Common myeloid progenitor, CD34-positive (primary cell): ENCODE measurements at regions of chr17 and their contacts with region 1.

Region 1: GRCh38 chr17:29777663-29778062 is 152.4 kb downstream of the SSH2 start:
- DNase-seq: no peak
- H3K4me3 ChIP-seq: no peak overlapping the region
- H3K27ac ChIP-seq: no peak overlapping the region
- H3K4me1 ChIP-seq: peaks cover 0 to 6% (median 3%) of the 10 kb centered on the region in 4 experiments
- H3K27me3 ChIP-seq: no peaks in the 10 kb centered on the region

Region 2: DNA sequence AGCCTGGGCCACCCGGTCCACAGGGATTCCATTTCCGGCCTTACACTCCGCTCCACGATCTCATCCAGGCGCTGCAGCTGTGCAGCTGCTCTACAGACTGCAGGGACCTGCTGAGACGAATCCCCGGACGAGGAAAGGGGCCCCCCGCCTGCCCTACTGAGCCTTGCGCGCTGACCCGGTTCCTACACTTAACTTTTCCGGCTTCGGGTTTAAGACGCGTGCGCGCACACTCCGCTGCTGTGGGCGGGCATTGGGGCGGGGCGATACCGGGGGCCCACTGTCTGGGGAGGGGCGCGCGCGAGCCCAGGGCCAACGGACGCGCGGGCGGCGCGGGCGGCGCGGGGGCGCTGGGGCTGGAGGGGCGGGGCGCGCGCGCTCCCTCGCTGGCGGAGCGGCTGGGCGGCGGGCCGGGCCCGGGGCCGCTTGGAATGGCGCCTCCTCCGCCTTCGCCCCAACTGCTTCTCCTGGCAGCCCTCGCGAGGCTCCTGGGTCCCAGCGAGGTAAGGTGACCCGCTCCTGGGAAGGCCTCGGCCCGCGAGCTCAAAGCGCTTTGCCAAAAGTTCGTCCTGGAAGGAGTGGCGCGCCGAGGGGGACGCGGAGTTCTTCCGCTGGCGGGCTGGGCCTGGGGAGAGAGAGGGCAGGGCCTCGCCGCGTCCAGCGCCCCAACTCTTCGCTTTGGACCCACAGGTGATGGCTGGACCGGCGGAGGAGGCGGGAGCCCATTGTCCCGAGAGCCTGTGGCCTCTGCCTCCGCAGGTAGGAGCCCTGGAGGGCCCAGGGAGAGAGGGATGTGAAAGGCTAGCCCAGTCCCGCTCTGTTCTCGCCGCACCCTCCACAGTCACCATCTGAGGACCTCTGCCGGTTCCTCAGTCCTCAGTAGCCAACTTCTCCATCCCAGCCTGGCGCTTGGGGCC is 209.1 kb before region 1 on chr17 and contains the start of gene TP53I13:
- CTCF ChIA-PET with region 1: no interaction called
- POLR2A ChIA-PET with region 1: no interaction called
- DNase-seq: peak; percentile 80 to 91 (median 87)
- H3K4me3 ChIP-seq: peak within 1 kb of the TSS; percentile 53 to 91 (median 77)
- H3K27ac ChIP-seq: peak within 1 kb of the TSS; percentile 54 to 81
- H3K4me1 ChIP-seq: peaks cover 3 to 61% (median 48%) of the 10 kb centered on the region in 4 experiments
- H3K27me3 ChIP-seq: no peaks in the 10 kb centered on the region

Region 3: DNA sequence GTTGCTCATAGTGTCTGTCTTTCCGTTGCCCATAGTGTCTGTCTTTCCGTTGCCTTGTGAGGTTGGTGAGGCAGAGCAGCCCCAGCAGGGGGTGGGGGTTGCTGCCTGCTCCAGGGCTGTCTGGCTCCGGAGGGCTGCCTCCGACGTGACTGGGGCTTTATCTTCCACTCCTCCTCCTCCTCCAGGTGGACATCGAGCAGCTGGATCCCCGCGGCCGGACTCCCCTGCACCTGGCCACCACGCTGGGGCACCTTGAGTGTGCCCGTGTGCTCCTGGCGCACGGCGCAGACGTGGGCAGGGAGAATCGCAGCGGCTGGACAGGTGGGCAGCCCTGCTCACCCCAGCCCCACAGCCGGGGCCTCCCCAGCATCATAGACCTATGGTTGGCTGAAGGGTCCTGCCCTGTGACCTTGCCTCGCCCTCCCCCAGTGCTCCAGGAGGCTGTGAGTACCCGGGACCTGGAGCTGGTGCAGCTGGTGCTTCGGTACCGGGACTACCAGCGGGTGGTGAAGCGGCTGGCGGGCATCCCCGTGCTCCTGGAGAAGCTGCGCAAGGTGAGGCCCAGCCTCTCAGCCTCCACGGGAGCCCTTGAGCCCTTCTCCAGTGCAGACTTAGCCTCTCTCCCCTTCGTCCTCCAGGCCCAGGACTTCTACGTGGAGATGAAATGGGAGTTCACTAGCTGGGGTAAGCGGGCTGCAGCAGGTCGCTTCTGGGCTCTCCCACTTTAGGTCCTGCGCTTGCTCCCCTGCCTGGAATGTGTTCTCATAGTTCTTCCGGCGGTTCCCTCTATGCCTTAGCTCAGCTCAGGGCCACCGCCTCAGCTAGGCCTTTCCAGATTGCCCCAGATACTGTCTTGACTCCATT is 169.9 kb before region 1 on chr17:
- CTCF ChIA-PET with region 1: no interaction called
- POLR2A ChIA-PET with region 1: no interaction called
- DNase-seq: no peak
- H3K4me3 ChIP-seq: no peak overlapping the region
- H3K27ac ChIP-seq: no peak overlapping the region
- H3K4me1 ChIP-seq: peaks cover 0 to 2% (median under 1%) of the 10 kb centered on the region in 4 experiments
- H3K27me3 ChIP-seq: peaks cover 0 to 3% (median 0%) of the 10 kb centered on the region in 5 experiments

Region 4: DNA sequence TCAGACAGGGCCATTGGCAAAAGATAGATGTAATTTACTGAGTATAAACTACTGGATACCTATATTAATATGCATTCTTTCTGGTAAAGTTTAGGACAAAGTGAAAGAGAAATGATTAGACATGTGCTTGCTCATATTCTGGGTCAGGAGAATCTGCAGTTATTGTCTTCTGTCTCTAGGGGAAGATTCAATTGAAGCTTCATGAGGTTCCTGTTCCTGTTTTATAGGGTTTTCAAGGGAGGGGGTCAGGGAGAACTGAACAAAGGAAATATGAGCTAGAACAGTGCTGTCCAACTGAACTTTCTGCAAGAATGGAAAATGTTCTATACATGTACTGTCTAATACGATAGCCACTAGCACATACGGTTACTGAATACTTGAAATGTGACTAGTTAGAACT is 95.6 kb before region 1 on chr17:
- CTCF ChIA-PET with region 1: interaction called, 12 read pairs
- POLR2A ChIA-PET with region 1: interaction called, 3 read pairs
- DNase-seq: peak; percentile 51 to 84 (median 79)
- H3K4me3 ChIP-seq: no peak overlapping the region
- H3K27ac ChIP-seq: peak overlapping the region in 1 of 2 experiments; percentile 17
- H3K4me1 ChIP-seq: peaks cover 23 to 42% (median 33%) of the 10 kb centered on the region in 4 experiments
- H3K27me3 ChIP-seq: no peaks in the 10 kb centered on the region

Region 5: DNA sequence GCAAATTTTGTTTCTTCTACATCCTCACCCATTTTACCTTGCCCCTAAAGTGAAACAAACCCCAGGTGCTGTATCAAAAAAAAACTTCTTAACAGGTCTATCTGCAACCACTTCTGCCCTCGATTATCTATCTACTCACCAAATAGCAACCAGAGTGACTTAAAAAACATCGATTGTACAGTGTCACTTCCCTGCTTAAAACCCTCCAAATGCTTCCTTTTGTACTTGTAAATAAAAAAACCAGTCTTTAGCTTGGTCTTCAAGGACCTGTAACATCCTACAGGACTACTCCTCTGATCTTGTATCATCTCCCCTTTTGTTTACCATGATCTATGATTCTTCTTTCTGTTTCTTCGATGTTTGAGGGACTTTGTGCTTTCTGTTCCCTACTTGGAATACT is 72.3 kb before region 1 on chr17:
- CTCF ChIA-PET with region 1: interaction called, 11 read pairs
- POLR2A ChIA-PET with region 1: no interaction called
- DNase-seq: peak in 1 of 3 donors; percentile 20
- H3K4me3 ChIP-seq: peak overlapping the region in 3 of 7 experiments; percentile 16 to 33 (median 33)
- H3K27ac ChIP-seq: peak overlapping the region; percentile 81 to 89
- H3K4me1 ChIP-seq: peaks cover 19 to 52% (median 34%) of the 10 kb centered on the region in 4 experiments
- H3K27me3 ChIP-seq: no peaks in the 10 kb centered on the region

Region 6: GRCh38 chr17:29760761-29761696 is 16.6 kb before region 1 on chr17:
- CTCF ChIA-PET with region 1: interaction called, 10 read pairs
- POLR2A ChIA-PET with region 1: no interaction called
- DNase-seq: peak; percentile 89 to 96 (median 95)
- H3K4me3 ChIP-seq: peak overlapping the region; percentile 73 to 95 (median 79)
- H3K27ac ChIP-seq: peak overlapping the region; percentile 15 to 73
- H3K4me1 ChIP-seq: peaks cover 16 to 47% (median 23%) of the 10 kb centered on the region in 4 experiments
- H3K27me3 ChIP-seq: no peaks in the 10 kb centered on the region

Region 7: GRCh38 chr17:29825604-29826003 is 47.9 kb after region 1 on chr17:
- CTCF ChIA-PET with region 1: no interaction called
- POLR2A ChIA-PET with region 1: no interaction called
- DNase-seq: no peak
- H3K4me3 ChIP-seq: no peak overlapping the region
- H3K27ac ChIP-seq: no peak overlapping the region
- H3K4me1 ChIP-seq: no peaks in the 10 kb centered on the region
- H3K27me3 ChIP-seq: no peaks in the 10 kb centered on the region